ENCODE measurements at regions of chr18 and their contacts with region 1.

Region 1: DNA sequence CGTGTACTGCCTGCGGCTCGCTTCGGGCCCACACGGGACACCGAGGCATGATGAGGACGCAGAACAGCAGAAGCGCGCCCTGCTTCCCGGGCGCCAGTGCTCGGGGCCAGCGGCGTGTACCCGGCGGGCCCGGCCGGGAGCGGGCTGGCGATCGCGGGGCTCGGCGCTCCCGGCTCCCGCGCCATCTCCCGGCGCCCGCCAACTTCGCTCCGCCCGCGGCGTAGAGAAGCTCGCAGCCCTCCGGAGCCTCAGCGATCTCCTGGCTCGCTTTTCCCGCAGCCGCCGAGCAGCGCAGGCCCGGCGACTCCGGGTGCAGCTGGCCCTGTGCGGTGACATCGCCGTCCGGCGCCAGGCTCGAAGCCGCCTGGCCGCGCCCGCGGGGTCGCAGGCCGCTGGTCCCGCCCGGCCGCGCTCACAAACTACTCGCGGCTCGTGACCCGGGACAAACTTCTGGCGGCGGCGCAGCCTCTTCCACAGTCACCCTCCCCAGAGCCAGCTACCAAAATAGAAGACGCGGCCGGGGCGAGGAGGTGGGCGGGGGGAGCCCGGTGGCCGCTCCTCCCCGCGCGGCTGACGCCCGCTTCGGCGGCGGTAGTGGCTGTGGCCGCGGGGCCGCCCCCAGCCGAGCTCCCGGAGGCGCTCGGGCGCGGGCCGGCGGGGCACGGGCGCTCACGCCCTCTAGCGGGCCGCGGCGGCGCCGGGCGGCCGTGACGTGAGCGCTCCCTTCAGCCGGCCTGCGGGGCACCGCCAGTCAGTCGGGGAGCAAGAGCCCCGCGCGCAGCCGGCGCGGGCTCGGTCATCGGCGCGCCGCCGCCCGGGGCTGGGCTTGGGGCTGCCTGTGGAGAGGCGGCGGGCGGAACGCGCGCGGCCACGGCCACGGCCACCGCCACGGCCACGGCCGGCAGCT is at the start of gene PTPRM:
- DNase-seq: peak; percentile 92
- H3K4me3 ChIP-seq: peak within 1 kb of the TSS; percentile 59 to 70
- H3K27ac ChIP-seq: peak within 1 kb of the TSS in 1 of 2 experiments; percentile 62; a peak in 2 of 4 replicates
- H3K4me1 ChIP-seq: peaks cover 0 to 9% of the 10 kb centered on the region in 2 experiments; a peak in 1 of 4 replicates
- H3K27me3 ChIP-seq: peaks cover 17% of the 10 kb centered on the region; the same call in 1 of the 2 replicates
- CTCF ChIP-seq: no peak
- EP300 ChIP-seq: no peak
- RAD21 ChIP-seq: peak; percentile 53
- polyA plus RNA-seq, gene PTPRM: 16.0 and 25.7 TPM in 2 replicates

Region 2: DNA sequence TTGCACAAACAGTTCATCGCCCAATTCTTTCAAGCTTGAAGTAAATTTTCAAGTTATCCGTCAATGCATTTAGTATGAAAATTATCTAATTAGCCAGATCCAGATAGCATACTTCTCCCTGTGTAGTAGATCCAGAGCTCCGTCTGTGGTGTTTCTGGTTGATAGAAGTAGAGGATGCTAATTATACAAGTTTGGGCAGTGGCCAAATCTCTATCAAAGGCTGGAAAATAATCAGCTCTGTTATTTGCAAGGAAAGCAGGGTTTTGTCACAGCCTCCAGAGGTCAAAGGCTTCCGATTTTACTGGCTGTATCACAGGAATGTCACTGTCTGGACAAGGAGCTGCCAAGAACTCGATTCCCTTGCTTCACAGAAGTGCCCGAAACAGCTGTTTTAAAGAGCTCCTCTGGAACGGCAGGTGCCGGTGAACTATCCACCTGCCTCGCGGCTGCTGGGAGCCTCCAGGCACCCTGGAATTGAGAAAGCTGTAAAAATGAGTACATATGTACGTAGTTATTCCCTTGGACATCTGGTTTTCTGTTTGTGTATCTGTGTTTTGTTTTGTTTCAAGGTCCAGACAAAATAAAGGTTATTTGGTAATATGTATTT is 307.2 kb before region 1 on chr18:
- CTCF ChIA-PET with region 1: interaction called, 13 read pairs
- POLR2A ChIA-PET with region 1: no interaction called
- DNase-seq: peak; percentile 70
- H3K4me3 ChIP-seq: no peak overlapping the region
- H3K27ac ChIP-seq: peak overlapping the region in 1 of 2 experiments; percentile 73; a peak in 2 of 4 replicates
- H3K4me1 ChIP-seq: peaks cover 0 to 18% of the 10 kb centered on the region in 2 experiments; a peak in 2 of 4 replicates
- H3K27me3 ChIP-seq: no peaks in the 10 kb centered on the region
- CTCF ChIP-seq: no peak
- EP300 ChIP-seq: peak in 1 of 2 experiments; percentile 86; a peak in 2 of 4 replicates
- RAD21 ChIP-seq: peak; percentile 14; the same call in 1 of the 2 replicates

Region 3: GRCh38 chr18:7456376-7456775 is 110.4 kb before region 1 on chr18:
- CTCF ChIA-PET with region 1: interaction called, 13 read pairs
- POLR2A ChIA-PET with region 1: no interaction called
- DNase-seq: no peak
- H3K4me3 ChIP-seq: no peak overlapping the region
- H3K27ac ChIP-seq: no peak overlapping the region
- H3K4me1 ChIP-seq: peaks cover 0 to 7% of the 10 kb centered on the region in 2 experiments; a peak in 1 of 4 replicates
- H3K27me3 ChIP-seq: no peaks in the 10 kb centered on the region
- CTCF ChIP-seq: no peak
- EP300 ChIP-seq: no peak
- RAD21 ChIP-seq: no peak

Region 4: GRCh38 chr18:7585276-7585670 is 18.5 kb after region 1 on chr18:
- CTCF ChIA-PET with region 1: interaction called, 34 read pairs
- POLR2A ChIA-PET with region 1: no interaction called
- DNase-seq: no peak
- H3K4me3 ChIP-seq: no peak overlapping the region
- H3K27ac ChIP-seq: no peak overlapping the region
- H3K4me1 ChIP-seq: peaks cover 0 to 2% of the 10 kb centered on the region in 2 experiments; a peak in 1 of 4 replicates
- H3K27me3 ChIP-seq: no peaks in the 10 kb centered on the region
- CTCF ChIP-seq: no peak
- EP300 ChIP-seq: no peak
- RAD21 ChIP-seq: no peak

Region 5: DNA sequence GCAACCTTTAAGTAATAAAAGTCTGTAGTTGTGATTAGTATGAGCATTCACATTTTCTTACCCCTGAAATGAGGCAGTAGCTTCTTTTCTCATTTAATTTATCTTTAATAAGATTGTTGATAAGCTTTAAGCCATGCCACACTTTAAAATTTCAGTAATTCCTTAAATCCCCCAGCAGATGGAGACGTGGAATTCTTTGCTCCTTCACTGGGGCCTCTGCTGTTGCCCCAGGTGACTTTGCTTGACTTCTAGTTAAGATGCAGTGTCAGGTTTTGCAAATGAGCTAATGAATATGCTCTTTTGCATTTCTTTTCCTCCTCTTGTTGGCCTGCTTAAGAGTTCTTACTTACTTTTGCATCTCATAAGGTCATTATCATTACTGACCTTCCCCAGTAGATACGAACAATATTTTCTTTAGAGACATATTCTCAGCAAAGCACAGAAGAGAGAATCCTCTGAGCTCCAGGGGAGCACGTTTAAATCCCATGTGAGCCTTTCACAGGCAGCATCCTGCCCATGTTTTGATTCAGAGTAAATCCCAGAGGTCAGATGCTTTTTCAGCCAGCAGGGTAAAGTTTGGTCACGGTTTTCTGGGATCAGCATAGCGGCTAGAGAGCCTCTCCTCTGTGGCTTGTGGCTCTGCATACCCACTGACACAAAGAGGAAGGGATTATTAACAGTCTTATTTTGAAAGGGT is 223.2 kb after region 1 on chr18:
- CTCF ChIA-PET with region 1: interaction called, 13 read pairs
- POLR2A ChIA-PET with region 1: no interaction called
- DNase-seq: peak; percentile 33
- H3K4me3 ChIP-seq: no peak overlapping the region; a peak in 1 of 4 replicates
- H3K27ac ChIP-seq: no peak overlapping the region
- H3K4me1 ChIP-seq: peaks cover 0 to 3% of the 10 kb centered on the region in 2 experiments; a peak in 1 of 4 replicates
- H3K27me3 ChIP-seq: no peaks in the 10 kb centered on the region
- CTCF ChIP-seq: peak; percentile 58
- EP300 ChIP-seq: no peak
- RAD21 ChIP-seq: peak; percentile 75

Region 6: GRCh38 chr18:8400296-8400695 is 833.5 kb after region 1 on chr18:
- CTCF ChIA-PET with region 1: interaction called, 11 read pairs
- POLR2A ChIA-PET with region 1: no interaction called
- DNase-seq: no peak
- H3K4me3 ChIP-seq: no peak overlapping the region
- H3K27ac ChIP-seq: no peak overlapping the region
- H3K4me1 ChIP-seq: peaks cover 0 to 34% of the 10 kb centered on the region in 2 experiments; a peak in 2 of 4 replicates
- H3K27me3 ChIP-seq: no peaks in the 10 kb centered on the region
- CTCF ChIP-seq: no peak
- EP300 ChIP-seq: no peak
- RAD21 ChIP-seq: no peak